MCF 10A (cell line): ENCODE measurements at regions of chr14 and their contacts with region 1.

Region 1: GRCh38 chr14:20332788-20333493 is at the start of gene CCNB1IP1:
- DNase-seq: peak; percentile 94
- H3K4me3 Mint-ChIP-seq: peak within 1 kb of the TSS; percentile 93
- H3K27ac Mint-ChIP-seq: peak within 1 kb of the TSS; percentile 94
- H3K4me1 Mint-ChIP-seq: peaks cover 25% of the 10 kb centered on the region
- H3K27me3 Mint-ChIP-seq: no peaks in the 10 kb centered on the region
- CTCF ChIP-seq: no peak
- total RNA-seq, gene CCNB1IP1: 105 and 108 TPM in 2 replicates

Region 2: DNA sequence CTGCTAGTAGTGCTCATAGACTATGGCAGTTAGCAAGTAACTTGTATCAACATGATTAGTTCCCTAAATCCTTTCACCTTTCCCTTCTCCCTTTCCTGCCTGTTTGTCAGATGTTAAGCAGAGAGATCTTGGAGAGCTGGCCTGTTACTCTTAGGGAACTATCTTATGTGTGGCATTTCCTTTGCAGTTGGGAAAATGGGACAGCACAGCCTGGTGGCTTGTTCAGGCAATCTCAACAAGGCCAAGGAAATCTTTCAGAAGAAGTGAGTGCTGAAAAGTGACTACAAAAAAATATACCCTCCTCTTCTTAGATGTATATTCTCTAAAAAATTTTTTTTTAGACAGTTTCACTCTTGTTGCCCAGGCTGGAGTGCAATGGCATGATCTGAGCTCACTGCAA is 17.9 kb after region 1 on chr14:
- CTCF ChIA-PET with region 1: interaction called, 23 read pairs
- POLR2A ChIA-PET with region 1: interaction called, 4 read pairs
- intact Hi-C with region 1: no loop called
- DNase-seq: no peak
- H3K4me3 Mint-ChIP-seq: no peak overlapping the region
- H3K27ac Mint-ChIP-seq: no peak overlapping the region
- H3K4me1 Mint-ChIP-seq: no peaks in the 10 kb centered on the region
- H3K27me3 Mint-ChIP-seq: no peaks in the 10 kb centered on the region
- CTCF ChIP-seq: no peak

Region 3: DNA sequence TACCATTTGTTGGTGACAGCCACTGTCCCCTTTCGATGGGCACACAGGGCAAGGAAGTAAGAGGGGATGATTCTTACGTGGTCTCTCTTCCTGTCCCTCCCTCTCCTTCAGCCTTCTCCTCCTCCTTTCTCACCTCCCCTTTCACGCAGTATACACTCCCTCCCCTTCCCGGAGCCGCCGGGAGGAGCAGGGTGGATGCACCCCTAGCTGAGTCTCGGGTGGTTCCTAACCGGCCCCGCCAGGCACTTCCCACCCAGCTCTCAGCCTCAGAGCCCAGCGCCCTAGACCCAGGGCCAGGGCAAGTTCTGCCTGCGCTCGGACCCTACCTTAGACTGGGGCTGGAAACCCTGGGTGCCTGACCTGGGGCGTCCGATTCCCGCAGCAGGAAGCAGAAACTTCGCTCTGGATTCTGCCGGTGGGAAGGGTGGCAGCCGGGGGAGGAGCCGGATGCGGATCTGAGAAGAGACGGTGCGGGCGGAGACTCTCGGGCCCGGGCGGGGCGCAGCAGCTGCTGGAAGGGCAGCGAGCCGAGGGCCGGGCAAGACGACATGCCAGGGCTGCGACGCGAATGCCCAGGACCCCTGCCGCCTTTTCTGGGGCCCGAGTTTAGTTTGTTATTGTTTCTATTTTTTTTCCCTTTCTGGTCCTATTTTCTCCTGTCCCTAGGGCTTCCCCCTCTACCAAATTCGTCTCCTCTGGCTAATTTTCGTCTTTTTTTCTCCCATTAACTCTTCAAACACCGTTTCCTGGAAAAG is 80.3 kb after region 1 on chr14 and contains the start of gene TEP1:
- CTCF ChIA-PET with region 1: interaction called, 28 read pairs
- POLR2A ChIA-PET with region 1: interaction called, 11 read pairs
- intact Hi-C with region 1: no loop called
- DNase-seq: peak; percentile 87
- H3K4me3 Mint-ChIP-seq: peak within 1 kb of the TSS; percentile 77
- H3K27ac Mint-ChIP-seq: peak within 1 kb of the TSS; percentile 49
- H3K4me1 Mint-ChIP-seq: peaks cover 7% of the 10 kb centered on the region
- H3K27me3 Mint-ChIP-seq: no peaks in the 10 kb centered on the region
- CTCF ChIP-seq: no peak
- total RNA-seq, gene TEP1: 20.4 and 22.7 TPM in 2 replicates

Region 4: GRCh38 chr14:20461274-20462001 is 128.5 kb after region 1 on chr14 and contains the start of gene PIP4P1:
- CTCF ChIA-PET with region 1: interaction called, 11 read pairs
- POLR2A ChIA-PET with region 1: interaction called, 22 read pairs
- intact Hi-C with region 1: loop called (anchors 2 kb)
- DNase-seq: peak; percentile 100
- H3K4me3 Mint-ChIP-seq: peak within 1 kb of the TSS; percentile 76
- H3K27ac Mint-ChIP-seq: peak within 1 kb of the TSS; percentile 92
- H3K4me1 Mint-ChIP-seq: peaks cover 21% of the 10 kb centered on the region
- H3K27me3 Mint-ChIP-seq: no peaks in the 10 kb centered on the region
- CTCF ChIP-seq: no peak
- total RNA-seq, gene PIP4P1: 22.5 and 34.9 TPM in 2 replicates

Region 5: DNA sequence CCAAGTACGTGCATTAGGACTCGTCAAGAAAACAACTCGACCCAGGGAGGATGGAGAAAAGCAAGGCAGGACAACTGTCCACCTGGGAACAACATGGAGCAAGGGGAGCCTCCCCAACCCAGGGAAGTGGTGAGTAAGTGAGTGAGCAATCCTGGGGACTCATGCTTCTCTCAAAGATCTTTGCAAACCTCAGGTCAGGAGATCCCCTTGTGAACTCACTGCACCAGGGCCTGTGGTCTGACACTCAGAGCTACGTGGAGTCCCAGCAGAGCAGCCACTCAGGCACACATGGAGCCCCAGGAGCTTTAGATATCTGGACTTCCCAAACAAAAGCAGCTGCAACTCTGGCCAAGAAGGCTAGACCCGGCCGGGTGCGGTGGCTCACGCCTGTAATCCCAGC is 835.1 kb after region 1 on chr14:
- CTCF ChIA-PET with region 1: no interaction called
- POLR2A ChIA-PET with region 1: no interaction called
- intact Hi-C with region 1: no loop called
- DNase-seq: peak; percentile 5
- H3K4me3 Mint-ChIP-seq: no peak overlapping the region
- H3K27ac Mint-ChIP-seq: no peak overlapping the region
- H3K4me1 Mint-ChIP-seq: peaks cover 11% of the 10 kb centered on the region
- H3K27me3 Mint-ChIP-seq: peaks cover 24% of the 10 kb centered on the region
- CTCF ChIP-seq: no peak